ENCODE measurements at regions of chr7 and their contacts with region 1.

Region 1: DNA sequence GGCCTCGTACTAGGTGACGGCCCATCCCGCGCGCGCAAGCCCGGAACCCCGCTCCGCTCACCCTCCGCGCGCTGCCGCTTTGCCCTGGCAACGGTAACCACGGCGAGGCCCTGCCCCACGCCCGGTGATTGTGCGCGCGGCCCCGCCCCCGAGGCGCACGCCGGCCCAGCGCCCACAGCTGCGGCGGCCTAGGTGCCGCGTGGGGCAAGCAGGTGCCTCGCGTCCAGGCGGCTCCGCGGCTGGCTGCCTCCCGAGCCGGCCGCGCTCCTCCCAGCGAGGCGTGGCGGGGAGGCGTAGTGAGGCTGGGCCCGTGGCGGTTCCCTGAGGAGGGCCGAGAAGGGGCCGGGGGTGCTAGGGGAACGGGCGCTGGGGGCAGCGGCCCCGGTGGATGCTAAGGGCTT is at the start of gene SMKR1:
- DNase-seq: peak; percentile 12
- ATAC-seq: peak; percentile 95
- H3K4me3 ChIP-seq: peak within 1 kb of the TSS; percentile 61; the same call in 1 of the 2 replicates
- H3K27ac ChIP-seq: no peak within 1 kb of the TSS
- H3K4me1 ChIP-seq: peaks cover 17% of the 10 kb centered on the region; the same call in 1 of the 2 replicates
- H3K27me3 ChIP-seq: no peaks in the 10 kb centered on the region; a peak in 1 of 4 replicates
- CTCF ChIP-seq: no peak
- EP300 ChIP-seq: no peak
- POLR2A ChIP-seq: peak; percentile 76
- RAD21 ChIP-seq: no peak
- polyA plus RNA-seq, gene SMKR1: 0.63 to 0.69 TPM

Region 2: GRCh38 chr7:129433847-129434674 is 68.3 kb before region 1 on chr7 and contains the start of gene STRIP2:
- CTCF ChIA-PET with region 1: no interaction called
- POLR2A ChIA-PET with region 1: no interaction called
- RAD21 ChIA-PET with region 1: no interaction called
- SMC1A ChIA-PET with region 1: no interaction called
- in situ Hi-C with region 1: no loop called
- intact Hi-C with region 1: no loop called
- DNase-seq: peak; percentile 40
- ATAC-seq: peak; percentile 98
- H3K4me3 ChIP-seq: peak within 1 kb of the TSS; percentile 95
- H3K27ac ChIP-seq: peak within 1 kb of the TSS; percentile 9; the same call in 1 of the 2 replicates
- H3K4me1 ChIP-seq: no peaks in the 10 kb centered on the region
- H3K27me3 ChIP-seq: no peaks in the 10 kb centered on the region
- CTCF ChIP-seq: 0 out of 6 replicates have a peak, but pooled peaks of 1 of the 3 experiments have one; percentile 3
- EP300 ChIP-seq: no peak
- POLR2A ChIP-seq: peak; percentile 83
- RAD21 ChIP-seq: no peak
- polyA plus RNA-seq, gene STRIP2: 0.48 to 0.58 TPM

Region 3: DNA sequence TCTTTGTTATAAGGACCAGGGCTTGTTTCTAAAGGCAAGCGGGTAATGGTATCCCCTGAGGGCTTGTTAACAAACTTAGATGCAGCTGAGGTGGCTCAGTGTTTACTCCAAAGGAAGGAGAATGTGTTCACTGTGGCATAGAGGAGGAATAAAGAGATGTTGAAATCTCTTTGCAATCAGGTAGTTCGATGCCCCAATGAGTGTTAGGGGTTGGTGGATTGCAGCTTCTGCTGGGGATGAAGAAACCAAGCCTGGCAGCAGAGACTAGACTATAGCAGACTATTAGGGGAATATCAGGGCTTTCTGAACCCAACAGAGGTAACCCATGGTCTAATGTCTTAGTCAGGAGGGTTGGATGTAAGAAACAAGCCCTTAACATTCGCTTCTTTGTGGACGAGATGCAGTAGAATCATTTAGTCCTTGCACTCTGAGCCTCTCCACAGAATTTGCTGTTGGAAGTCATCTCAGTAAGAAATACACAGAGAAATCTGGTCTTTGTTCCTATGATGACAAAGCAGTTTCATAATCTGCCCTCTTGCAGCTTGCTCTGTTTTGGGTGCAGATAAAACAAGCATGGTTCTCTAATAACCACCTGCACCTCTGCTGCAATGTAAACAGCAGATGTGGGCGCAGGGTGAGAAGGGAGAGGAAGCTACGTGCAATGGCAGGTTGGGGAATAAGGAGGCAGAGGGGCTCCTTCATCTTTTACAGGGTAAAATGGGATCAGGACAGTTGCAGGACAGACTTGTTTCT is 217.8 kb after region 1 on chr7:
- CTCF ChIA-PET with region 1: no interaction called
- POLR2A ChIA-PET with region 1: no interaction called
- RAD21 ChIA-PET with region 1: no interaction called
- SMC1A ChIA-PET with region 1: no interaction called
- in situ Hi-C with region 1: no loop called
- intact Hi-C with region 1: loop called (anchors 10 kb)
- DNase-seq: no peak
- ATAC-seq: no peak
- H3K4me3 ChIP-seq: no peak overlapping the region
- H3K27ac ChIP-seq: no peak overlapping the region
- H3K4me1 ChIP-seq: no peaks in the 10 kb centered on the region
- H3K27me3 ChIP-seq: no peaks in the 10 kb centered on the region
- CTCF ChIP-seq: no peak
- EP300 ChIP-seq: no peak
- POLR2A ChIP-seq: no peak
- RAD21 ChIP-seq: no peak

Region 4: GRCh38 chr7:129804890-129805719 is 302.7 kb after region 1 on chr7:
- CTCF ChIA-PET with region 1: no interaction called
- POLR2A ChIA-PET with region 1: no interaction called
- RAD21 ChIA-PET with region 1: no interaction called
- SMC1A ChIA-PET with region 1: no interaction called
- in situ Hi-C with region 1: no loop called
- intact Hi-C with region 1: no loop called
- DNase-seq: no peak
- ATAC-seq: no peak
- H3K4me3 ChIP-seq: no peak overlapping the region
- H3K27ac ChIP-seq: no peak overlapping the region
- H3K4me1 ChIP-seq: no peaks in the 10 kb centered on the region
- H3K27me3 ChIP-seq: no peaks in the 10 kb centered on the region
- CTCF ChIP-seq: no peak
- EP300 ChIP-seq: no peak
- POLR2A ChIP-seq: no peak
- RAD21 ChIP-seq: no peak